Activated CD4-positive, alpha-beta memory T cell treated with anti-CD3 and anti-CD28 coated beads for 36 hours (primary cell): ENCODE measurements at regions of chr6 and their contacts with region 1.

Region 1: DNA sequence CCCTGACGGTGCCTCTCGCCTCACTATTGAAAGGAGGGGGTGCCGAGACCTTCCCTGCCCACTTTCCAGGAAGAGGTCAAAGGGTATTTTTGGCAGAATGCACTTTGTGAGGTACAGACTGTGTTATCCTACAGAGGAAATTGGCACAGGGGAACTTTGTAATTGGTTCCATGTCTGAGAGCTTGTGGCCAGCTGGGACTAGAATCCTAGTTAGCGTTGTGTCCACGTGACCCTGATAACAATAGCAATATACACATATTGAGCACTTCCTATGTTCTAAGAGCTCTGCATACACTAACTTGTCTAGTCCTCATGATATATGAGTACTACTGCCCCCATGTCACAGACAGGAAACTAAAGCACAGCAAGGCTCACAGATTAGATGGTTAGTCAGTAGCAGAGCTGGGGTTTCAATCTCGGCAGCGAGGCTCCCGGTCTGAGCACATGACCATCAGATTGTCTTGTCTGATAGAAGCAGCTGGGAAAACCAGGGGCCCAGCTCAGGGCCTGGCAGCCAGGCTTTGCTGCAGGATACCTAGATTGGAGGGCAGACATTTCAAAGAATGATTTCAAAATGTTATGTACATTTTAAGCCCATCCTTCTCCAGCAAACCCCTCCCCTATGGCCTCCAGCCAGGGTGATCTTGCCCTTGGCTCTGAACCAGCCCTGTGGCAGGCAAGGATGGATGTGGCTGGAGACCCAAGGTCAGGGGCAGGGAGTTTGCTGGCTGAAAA is 1.4 kb downstream of the MAPK13 start:
- DNase-seq: peak; percentile 84
- H3K4me3 Mint-ChIP-seq: peak overlapping the region; percentile 83
- H3K27ac Mint-ChIP-seq: peak overlapping the region; percentile 94
- H3K4me1 Mint-ChIP-seq: peaks cover 43% of the 10 kb centered on the region
- H3K27me3 Mint-ChIP-seq: no peaks in the 10 kb centered on the region

Region 2: GRCh38 chr6:36169023-36170007 is 37.6 kb after region 1 on chr6:
- CTCF ChIA-PET with region 1: interaction called, 4 read pairs
- POLR2A ChIA-PET with region 1: interaction called, 4 read pairs
- intact Hi-C with region 1: loop called (anchors 1 kb)
- DNase-seq: peak; percentile 12
- H3K4me3 Mint-ChIP-seq: no peak overlapping the region
- H3K27ac Mint-ChIP-seq: peak overlapping the region; percentile 38
- H3K4me1 Mint-ChIP-seq: peaks cover 18% of the 10 kb centered on the region
- H3K27me3 Mint-ChIP-seq: no peaks in the 10 kb centered on the region

Region 3: DNA sequence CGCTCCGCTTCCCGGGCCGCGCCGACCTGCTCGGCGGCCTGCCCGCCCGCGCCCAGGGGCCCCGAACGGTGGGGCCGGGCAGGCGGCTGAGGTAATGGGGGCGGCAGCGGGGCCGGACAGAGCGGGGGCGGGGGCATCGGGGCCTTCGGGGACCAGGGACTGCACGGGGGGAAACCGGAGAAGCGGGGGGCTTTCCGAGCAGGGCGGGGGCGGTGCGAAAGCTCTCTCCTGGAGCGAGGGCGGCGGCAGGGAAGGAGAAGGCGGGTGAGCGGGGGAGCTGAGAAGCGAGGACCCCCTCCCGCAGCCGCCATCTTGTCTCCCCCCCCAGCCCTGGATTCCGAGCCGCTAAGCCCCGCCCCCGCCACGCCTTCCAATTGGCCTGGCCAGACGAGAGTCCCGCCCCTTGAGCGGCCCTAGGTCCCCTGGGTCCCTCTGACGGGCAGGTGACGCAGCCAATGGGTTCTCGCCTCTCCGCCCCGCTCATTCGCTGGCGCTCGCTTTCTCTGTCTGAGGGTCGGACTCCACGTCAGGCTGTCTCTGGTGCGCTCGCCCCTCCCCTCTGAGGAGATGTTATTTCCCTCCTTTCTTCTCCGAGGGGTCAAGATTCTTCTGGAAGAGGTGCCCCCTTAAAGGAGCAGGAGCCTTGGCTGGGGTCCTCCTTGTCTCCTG is 65.3 kb after region 1 on chr6:
- CTCF ChIA-PET with region 1: interaction called, 10 read pairs
- POLR2A ChIA-PET with region 1: interaction called, 5 read pairs
- intact Hi-C with region 1: loop called (anchors 1 kb)
- DNase-seq: peak; percentile 100
- H3K4me3 Mint-ChIP-seq: peak overlapping the region; percentile 82
- H3K27ac Mint-ChIP-seq: peak overlapping the region; percentile 90
- H3K4me1 Mint-ChIP-seq: peaks cover 46% of the 10 kb centered on the region
- H3K27me3 Mint-ChIP-seq: no peaks in the 10 kb centered on the region